Panc1 (cell line): ENCODE measurements at regions of chr5 and their contacts with region 1.

Region 1: GRCh38 chr5:134225618-134226440 is at the start of gene PPP2CA:
- DNase-seq: peak; percentile 99
- ATAC-seq: peak; percentile 94
- H3K4me3 ChIP-seq: peak within 1 kb of the TSS; percentile 94 to 99
- H3K27ac ChIP-seq: peak within 1 kb of the TSS; percentile 98
- H3K4me1 ChIP-seq: peaks cover 38% of the 10 kb centered on the region
- H3K27me3 ChIP-seq: no peaks in the 10 kb centered on the region
- CTCF ChIP-seq: no peak
- total RNA-seq, gene PPP2CA: 184 TPM

Region 2: GRCh38 chr5:134029156-134029555 is 196.7 kb before region 1 on chr5:
- CTCF ChIA-PET with region 1: no interaction called
- POLR2A ChIA-PET with region 1: no interaction called
- in situ Hi-C with region 1: no loop called
- intact Hi-C with region 1: no loop called
- DNase-seq: no peak
- ATAC-seq: peak; percentile 40; the same call in 1 of the 2 replicates
- H3K4me3 ChIP-seq: no peak overlapping the region
- H3K27ac ChIP-seq: peak overlapping the region; percentile 71
- H3K4me1 ChIP-seq: no peaks in the 10 kb centered on the region
- H3K27me3 ChIP-seq: no peaks in the 10 kb centered on the region
- CTCF ChIP-seq: no peak

Region 3: DNA sequence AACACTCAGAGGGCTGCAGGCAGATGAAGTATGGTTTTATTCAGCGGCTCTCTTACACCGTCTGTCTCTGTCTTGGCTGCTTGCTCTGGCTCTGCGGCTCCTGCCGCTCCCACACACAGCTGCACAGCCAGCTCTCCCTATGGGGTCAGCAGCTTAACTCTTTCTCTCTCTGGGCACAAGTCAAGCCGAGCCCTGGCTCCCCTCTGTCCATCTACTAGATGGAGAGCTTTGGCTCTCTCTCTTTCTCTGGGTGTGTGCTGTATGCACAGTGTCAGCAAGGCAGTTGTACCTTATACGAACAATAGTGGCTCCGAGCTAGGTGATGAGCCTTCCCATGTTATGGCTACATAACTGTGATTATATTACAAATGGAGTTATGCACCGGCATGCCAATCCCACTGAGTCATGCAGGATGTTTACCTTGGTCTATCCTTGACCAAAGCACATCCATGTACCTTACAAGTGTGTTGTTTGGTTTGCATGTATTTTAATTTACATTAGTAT is 19.3 kb after region 1 on chr5:
- CTCF ChIA-PET with region 1: interaction called, 3 read pairs
- POLR2A ChIA-PET with region 1: interaction called, 17 read pairs
- in situ Hi-C with region 1: no loop called
- intact Hi-C with region 1: no loop called
- DNase-seq: peak; percentile 87
- ATAC-seq: peak; percentile 87
- H3K4me3 ChIP-seq: peak overlapping the region; percentile 11 to 41; a peak in 3 of 4 replicates
- H3K27ac ChIP-seq: peak overlapping the region; percentile 40
- H3K4me1 ChIP-seq: peaks cover 42% of the 10 kb centered on the region
- H3K27me3 ChIP-seq: no peaks in the 10 kb centered on the region
- CTCF ChIP-seq: no peak

Region 4: DNA sequence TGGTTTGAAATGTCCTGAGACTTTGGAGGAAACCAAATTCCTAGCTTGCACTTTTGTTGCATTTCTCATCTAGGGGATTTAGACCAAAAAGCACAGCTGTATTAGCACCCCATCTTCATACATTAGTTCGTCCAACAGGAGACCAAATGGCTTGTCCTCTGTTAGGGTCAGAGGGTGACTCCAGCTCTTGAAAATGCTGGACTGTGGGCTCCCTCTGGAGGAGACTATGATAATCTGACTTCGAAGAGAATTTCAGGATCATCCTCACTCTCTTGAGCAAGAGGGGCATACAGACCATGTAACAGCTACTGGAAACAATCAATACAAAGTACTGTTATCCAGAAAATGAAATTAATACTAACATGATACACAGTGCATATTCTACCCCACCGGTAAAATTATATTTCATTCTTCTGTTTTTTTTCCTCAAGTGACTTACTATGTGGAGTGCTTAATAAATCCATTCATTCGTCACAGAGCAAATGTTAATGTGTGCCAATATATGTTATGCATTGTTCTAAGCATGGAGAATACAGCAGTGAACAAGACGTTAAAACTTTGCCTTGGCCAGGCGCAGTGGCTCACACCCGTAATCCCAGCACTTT is 63.8 kb after region 1 on chr5:
- CTCF ChIA-PET with region 1: interaction called, 3 read pairs
- POLR2A ChIA-PET with region 1: no interaction called
- in situ Hi-C with region 1: no loop called
- intact Hi-C with region 1: loop called (anchors 10 kb)
- DNase-seq: peak; percentile 75
- ATAC-seq: peak; percentile 99
- H3K4me3 ChIP-seq: no peak overlapping the region
- H3K27ac ChIP-seq: no peak overlapping the region
- H3K4me1 ChIP-seq: no peaks in the 10 kb centered on the region
- H3K27me3 ChIP-seq: no peaks in the 10 kb centered on the region
- CTCF ChIP-seq: peak; percentile 83

Region 5: GRCh38 chr5:134304311-134304710 is 78.5 kb after region 1 on chr5:
- CTCF ChIA-PET with region 1: no interaction called
- POLR2A ChIA-PET with region 1: interaction called, 12 read pairs
- in situ Hi-C with region 1: no loop called
- intact Hi-C with region 1: no loop called
- DNase-seq: no peak
- ATAC-seq: no peak
- H3K4me3 ChIP-seq: no peak overlapping the region
- H3K27ac ChIP-seq: no peak overlapping the region
- H3K4me1 ChIP-seq: no peaks in the 10 kb centered on the region
- H3K27me3 ChIP-seq: no peaks in the 10 kb centered on the region
- CTCF ChIP-seq: no peak